Endothelial cell of umbilical vein (primary cell): ENCODE measurements at regions of chr1 and their contacts with region 1.

Region 1: DNA sequence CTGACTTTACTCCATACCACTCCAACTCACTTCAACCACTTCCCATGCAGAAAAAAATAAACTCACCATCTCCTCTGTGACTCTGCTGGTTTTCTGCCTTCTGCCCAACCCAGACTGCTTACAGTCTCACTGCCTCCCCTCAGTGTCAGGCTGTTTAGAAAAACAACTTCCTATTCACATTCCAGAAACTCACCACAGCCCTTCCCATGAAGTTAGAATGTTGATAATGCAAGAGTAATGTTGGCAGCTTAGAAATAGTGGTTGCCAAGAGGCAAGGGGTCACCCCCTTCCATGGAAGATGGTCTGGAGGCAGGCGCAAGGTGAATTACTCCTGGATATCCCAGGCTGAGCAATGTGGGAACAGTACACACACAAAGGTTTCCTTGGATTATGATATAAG is at the start of gene SELP:
- DNase-seq: peak; percentile 70
- H3K4me3 ChIP-seq: no peak within 1 kb of the TSS
- H3K27ac ChIP-seq: no peak within 1 kb of the TSS
- H3K4me1 ChIP-seq: peaks cover 9% of the 10 kb centered on the region
- H3K27me3 ChIP-seq: no peaks in the 10 kb centered on the region
- CTCF ChIP-seq: no peak
- POLR2A ChIP-seq: no peak
- total RNA-seq, gene SELP: 0.48 and 1.3 TPM in 2 replicates

Region 2: GRCh38 chr1:169618367-169618766 is 11.6 kb before region 1 on chr1:
- CTCF ChIA-PET with region 1: no interaction called
- POLR2A ChIA-PET with region 1: no interaction called
- dilution Hi-C with region 1: no loop called
- intact Hi-C with region 1: loop called (anchors 1 kb)
- DNase-seq: peak; percentile 85
- H3K4me3 ChIP-seq: no peak overlapping the region
- H3K27ac ChIP-seq: no peak overlapping the region
- H3K4me1 ChIP-seq: peaks cover 12% of the 10 kb centered on the region
- H3K27me3 ChIP-seq: no peaks in the 10 kb centered on the region
- CTCF ChIP-seq: no peak
- POLR2A ChIP-seq: no peak

Region 3: GRCh38 chr1:169694304-169695075 is 64.5 kb after region 1 on chr1:
- CTCF ChIA-PET with region 1: no interaction called
- POLR2A ChIA-PET with region 1: no interaction called
- dilution Hi-C with region 1: no loop called
- intact Hi-C with region 1: no loop called
- DNase-seq: peak; percentile 16
- H3K4me3 ChIP-seq: no peak overlapping the region
- H3K27ac ChIP-seq: no peak overlapping the region
- H3K4me1 ChIP-seq: peaks cover 5% of the 10 kb centered on the region
- H3K27me3 ChIP-seq: no peaks in the 10 kb centered on the region
- CTCF ChIP-seq: no peak
- POLR2A ChIP-seq: no peak